ENCODE measurements at regions of chr21 and their contacts with region 1.

Region 1: GRCh38 chr21:46144464-46145070 is 10.8 kb downstream of the FTCD start:
- DNase-seq: no peak
- ATAC-seq: no peak
- H3K4me3 ChIP-seq: no peak overlapping the region
- H3K27ac ChIP-seq: peak overlapping the region; percentile 12; the same call in 1 of the 2 replicates
- H3K4me1 ChIP-seq: peaks cover 0 to 19% of the 10 kb centered on the region in 2 experiments; a peak in 2 of 4 replicates
- H3K27me3 ChIP-seq: no peaks in the 10 kb centered on the region
- CTCF ChIP-seq: no peak
- POLR2A ChIP-seq: no peak
- RAD21 ChIP-seq: no peak

Region 2: GRCh38 chr21:45973659-45974072 is 170.9 kb before region 1 on chr21:
- CTCF ChIA-PET with region 1: interaction called, 18 read pairs
- POLR2A ChIA-PET with region 1: interaction called, 3 read pairs
- RAD21 ChIA-PET with region 1: interaction called in 1 of 2 experiments, 5 read pairs
- intact Hi-C with region 1: loop called (anchors 5 kb)
- DNase-seq: peak; percentile 35
- ATAC-seq: peak; percentile 52
- H3K4me3 ChIP-seq: peak overlapping the region; percentile 47 to 60
- H3K27ac ChIP-seq: peak overlapping the region; percentile 93
- H3K4me1 ChIP-seq: peaks cover 23 to 37% of the 10 kb centered on the region in 2 experiments
- H3K27me3 ChIP-seq: no peaks in the 10 kb centered on the region
- CTCF ChIP-seq: peak in 2 of 3 experiments; percentile 70 to 76; a peak in 4 of 6 replicates
- POLR2A ChIP-seq: no peak
- RAD21 ChIP-seq: no peak

Region 3: DNA sequence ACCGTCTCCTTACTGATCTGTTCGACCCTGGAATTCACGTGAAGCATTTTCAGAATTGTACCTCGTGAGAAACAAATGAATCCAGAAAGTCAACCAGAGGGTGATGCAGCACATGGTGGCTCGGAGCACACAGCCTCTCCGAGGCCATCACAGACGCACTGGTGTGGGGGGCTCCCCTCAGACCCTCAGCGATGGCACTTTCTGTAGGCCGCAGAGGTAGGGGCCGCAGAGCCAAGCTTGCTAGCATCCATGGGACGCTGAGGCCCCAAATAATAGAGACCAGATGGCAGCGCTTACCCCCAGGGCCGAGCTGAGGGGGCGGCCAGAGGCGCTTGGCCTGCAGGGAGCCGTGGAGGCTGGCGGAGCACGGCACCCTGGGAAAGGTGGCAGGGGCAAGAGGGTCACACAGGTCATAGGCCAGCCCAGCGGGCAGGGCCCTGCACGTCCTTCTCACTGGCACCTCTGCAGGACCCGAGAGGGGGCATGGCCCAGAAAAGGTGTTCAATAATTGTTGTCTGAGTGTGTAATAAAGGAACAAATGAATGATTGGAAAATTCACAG is 74.8 kb before region 1 on chr21:
- CTCF ChIA-PET with region 1: no interaction called
- POLR2A ChIA-PET with region 1: no interaction called
- RAD21 ChIA-PET with region 1: no interaction called
- intact Hi-C with region 1: no loop called
- DNase-seq: no peak
- ATAC-seq: no peak
- H3K4me3 ChIP-seq: no peak overlapping the region
- H3K27ac ChIP-seq: no peak overlapping the region
- H3K4me1 ChIP-seq: no peaks in the 10 kb centered on the region
- H3K27me3 ChIP-seq: no peaks in the 10 kb centered on the region
- CTCF ChIP-seq: no peak
- POLR2A ChIP-seq: no peak
- RAD21 ChIP-seq: no peak

Region 4: GRCh38 chr21:46210378-46211136 is 66.0 kb after region 1 on chr21:
- CTCF ChIA-PET with region 1: interaction called, 3 read pairs
- POLR2A ChIA-PET with region 1: no interaction called
- RAD21 ChIA-PET with region 1: no interaction called
- intact Hi-C with region 1: loop called (anchors 5 kb)
- DNase-seq: no peak
- ATAC-seq: 0 out of 2 replicates have a peak, but pooled peaks have one; percentile 49
- H3K4me3 ChIP-seq: no peak overlapping the region
- H3K27ac ChIP-seq: no peak overlapping the region
- H3K4me1 ChIP-seq: no peaks in the 10 kb centered on the region
- H3K27me3 ChIP-seq: no peaks in the 10 kb centered on the region
- CTCF ChIP-seq: peak in 2 of 3 experiments; percentile 11 to 30; a peak in 2 of 6 replicates
- POLR2A ChIP-seq: no peak
- RAD21 ChIP-seq: no peak; the same call in 1 of the 2 replicates

Region 5: DNA sequence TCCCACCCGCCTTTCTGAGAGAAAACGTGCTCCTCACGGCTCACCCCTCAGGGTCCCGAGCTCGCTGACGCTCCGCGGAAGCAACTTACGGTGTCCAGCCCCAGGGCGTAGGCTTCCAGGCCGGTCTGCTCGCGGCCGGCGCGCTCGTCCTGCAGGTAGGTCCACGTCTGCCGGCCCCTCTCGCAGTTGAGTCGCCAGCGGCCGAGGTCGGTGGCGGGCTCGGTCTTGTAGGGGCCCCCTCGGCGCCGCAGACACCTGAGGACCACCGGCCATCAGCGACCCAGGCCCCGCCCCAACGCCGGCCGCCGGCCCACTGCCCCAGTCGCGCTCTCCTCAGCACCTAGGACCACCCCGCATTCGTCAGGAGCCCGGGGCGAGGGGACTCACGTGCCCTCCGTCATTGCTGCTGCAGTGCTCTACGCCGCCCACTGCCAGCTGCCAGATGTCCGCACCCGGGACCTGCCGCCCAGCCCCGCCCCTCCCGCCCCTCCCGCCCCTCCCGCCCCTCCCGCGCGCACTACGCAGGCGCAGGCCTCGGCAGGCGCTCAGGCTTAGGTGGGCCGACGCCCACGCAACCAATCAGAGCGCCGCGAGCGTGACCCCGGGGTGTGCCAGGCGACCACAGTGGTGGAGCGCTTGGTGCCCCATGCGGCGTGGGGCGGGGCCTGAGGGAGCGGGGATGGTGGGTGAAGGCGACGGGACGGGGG is 83.9 kb after region 1 on chr21 and contains the start of gene LSS:
- CTCF ChIA-PET with region 1: no interaction called
- POLR2A ChIA-PET with region 1: no interaction called
- RAD21 ChIA-PET with region 1: interaction called in 1 of 2 experiments, 3 read pairs
- intact Hi-C with region 1: loop called (anchors 5 kb)
- DNase-seq: peak; percentile 93
- ATAC-seq: peak; percentile 97
- H3K4me3 ChIP-seq: peak within 1 kb of the TSS; percentile 68 to 76
- H3K27ac ChIP-seq: peak within 1 kb of the TSS; percentile 67; the same call in 1 of the 2 replicates
- H3K4me1 ChIP-seq: peaks cover 15 to 29% of the 10 kb centered on the region in 2 experiments
- H3K27me3 ChIP-seq: no peaks in the 10 kb centered on the region
- CTCF ChIP-seq: no peak
- POLR2A ChIP-seq: peak; percentile 19
- RAD21 ChIP-seq: no peak
- total RNA-seq, gene LSS: 44.7 TPM

Region 6: GRCh38 chr21:46285761-46286496 is 141.4 kb after region 1 on chr21 and contains the start of gene YBEY:
- CTCF ChIA-PET with region 1: no interaction called
- POLR2A ChIA-PET with region 1: no interaction called
- RAD21 ChIA-PET with region 1: no interaction called
- intact Hi-C with region 1: loop called (anchors 10 kb)
- DNase-seq: peak; percentile 81
- ATAC-seq: peak; percentile 95
- H3K4me3 ChIP-seq: peak within 1 kb of the TSS; percentile 72 to 100
- H3K27ac ChIP-seq: peak within 1 kb of the TSS; percentile 95
- H3K4me1 ChIP-seq: peaks cover 11 to 17% of the 10 kb centered on the region in 2 experiments
- H3K27me3 ChIP-seq: no peaks in the 10 kb centered on the region
- CTCF ChIP-seq: peak in 2 of 3 experiments; percentile 24 to 34; a peak in 2 of 6 replicates
- POLR2A ChIP-seq: no peak
- RAD21 ChIP-seq: peak; percentile 26
- total RNA-seq, gene YBEY: 31.5 TPM

Region 7: GRCh38 chr21:46323227-46324128 is 178.9 kb after region 1 on chr21 and contains the start of gene C21orf58:
- CTCF ChIA-PET with region 1: interaction called, 14 read pairs
- POLR2A ChIA-PET with region 1: no interaction called
- RAD21 ChIA-PET with region 1: interaction called in 1 of 2 experiments, 4 read pairs
- intact Hi-C with region 1: loop called (anchors 5 kb)
- DNase-seq: peak; percentile 93
- ATAC-seq: peak; percentile 83
- H3K4me3 ChIP-seq: peak within 1 kb of the TSS; percentile 89 to 93
- H3K27ac ChIP-seq: peak within 1 kb of the TSS; percentile 96
- H3K4me1 ChIP-seq: peaks cover 20 to 32% of the 10 kb centered on the region in 2 experiments
- H3K27me3 ChIP-seq: no peaks in the 10 kb centered on the region
- CTCF ChIP-seq: no peak
- POLR2A ChIP-seq: peak; percentile 44
- RAD21 ChIP-seq: no peak
- total RNA-seq, gene C21orf58: 10.8 TPM

Region 8: DNA sequence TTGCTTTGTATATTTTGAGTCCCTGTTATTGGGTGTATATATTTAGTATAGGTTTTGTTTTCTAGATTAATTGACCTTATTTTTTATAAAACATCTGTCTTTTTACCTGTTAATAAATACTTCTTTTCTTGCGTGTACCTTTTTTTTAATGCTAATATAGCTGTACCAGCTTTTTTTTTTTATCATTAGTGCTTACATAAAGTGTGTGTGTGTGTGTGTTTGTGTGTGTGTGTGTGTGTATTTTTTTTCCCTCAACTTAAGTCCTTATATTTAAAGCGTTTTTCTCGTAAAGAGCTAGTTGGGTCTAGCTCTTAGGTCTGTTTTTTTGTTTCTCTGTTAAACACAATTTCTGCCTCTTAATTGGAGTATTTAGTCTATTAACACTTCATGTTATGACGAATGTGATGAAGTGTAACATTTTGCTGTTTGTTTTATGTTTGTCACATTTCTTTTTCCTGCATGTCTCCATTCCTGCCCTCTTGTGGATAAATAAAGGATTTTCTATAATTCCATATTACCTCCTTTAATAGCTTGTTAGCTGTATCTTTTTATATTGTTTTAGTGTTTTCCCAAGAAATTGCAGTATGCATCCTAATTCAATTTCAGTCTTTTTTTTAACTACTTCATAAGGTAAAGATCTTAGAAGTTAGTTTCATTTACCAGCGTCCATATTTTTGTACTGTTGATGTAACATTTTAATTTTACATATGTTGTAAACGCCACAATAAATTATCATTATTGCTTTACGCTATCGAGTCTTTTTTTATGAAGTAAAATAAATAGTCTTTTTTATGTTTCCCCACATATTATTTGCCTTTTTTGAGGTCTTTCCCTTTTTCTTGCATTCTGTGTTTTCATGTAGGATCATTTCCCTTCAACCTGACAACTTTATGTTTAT is 495.2 kb after region 1 on chr21:
- CTCF ChIA-PET with region 1: interaction called, 15 read pairs
- POLR2A ChIA-PET with region 1: interaction called, 4 read pairs
- RAD21 ChIA-PET with region 1: interaction called in 1 of 2 experiments, 3 read pairs
- intact Hi-C with region 1: no loop called
- DNase-seq: no peak
- ATAC-seq: no peak
- H3K4me3 ChIP-seq: no peak overlapping the region
- H3K27ac ChIP-seq: no peak overlapping the region
- H3K4me1 ChIP-seq: peaks cover 3 to 17% of the 10 kb centered on the region in 2 experiments; a peak in 3 of 4 replicates
- H3K27me3 ChIP-seq: no peaks in the 10 kb centered on the region
- CTCF ChIP-seq: peak in 2 of 3 experiments; percentile 36 to 51; a peak in 4 of 6 replicates
- POLR2A ChIP-seq: no peak
- RAD21 ChIP-seq: no peak

Measured in HCT116 (cell line).